ENCODE measurements at regions of chr7 and their contacts with region 1.

Region 1: DNA sequence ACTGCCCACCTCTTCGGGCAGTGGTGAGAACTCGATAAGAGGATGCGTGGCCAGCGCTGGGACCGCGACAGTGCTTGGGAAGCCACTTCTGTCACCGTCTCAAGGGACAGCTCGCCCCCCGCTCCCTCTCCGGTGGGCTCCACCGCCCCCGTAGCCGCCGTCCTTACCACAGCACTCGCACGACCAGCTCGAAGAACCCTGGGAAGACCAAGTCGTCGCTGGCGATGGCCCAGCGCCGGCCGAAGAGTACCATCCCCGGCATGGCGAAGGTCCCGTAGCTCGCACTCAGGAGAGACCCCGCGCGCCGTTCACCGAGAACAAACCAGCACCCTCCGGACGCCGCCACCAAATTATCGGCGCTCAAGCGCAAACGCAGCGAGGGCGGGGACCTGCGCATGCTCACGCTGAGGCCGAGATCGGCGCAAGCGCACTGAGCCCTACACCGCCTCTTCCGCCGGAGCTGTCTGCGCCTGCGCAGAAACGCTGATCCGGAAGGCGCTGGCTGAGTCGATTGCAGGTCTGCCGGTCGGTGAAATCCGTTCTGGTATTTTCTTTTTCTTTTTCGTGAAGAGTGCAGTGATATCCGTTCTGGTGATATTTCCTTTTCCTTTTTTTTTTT is at the start of gene DAGLB:
- DNase-seq: peak; percentile 82 to 87
- ATAC-seq: peak; percentile 82 to 84
- H3K4me3 ChIP-seq: peak within 1 kb of the TSS; percentile 91 to 97 (median 92)
- H3K27ac ChIP-seq: peak within 1 kb of the TSS; percentile 93 to 98 (median 97)
- H3K4me1 ChIP-seq: peaks cover 33 to 37% of the 10 kb centered on the region in 2 donors
- H3K27me3 ChIP-seq: no peaks in the 10 kb centered on the region
- CTCF ChIP-seq: no peak
- POLR2A ChIP-seq: peak; percentile 93 to 94
- total RNA-seq, gene DAGLB: 11.7 to 24.0 (median 16.1) TPM

Region 2: GRCh38 chr7:6008668-6009611 is 438.8 kb before region 1 on chr7 and contains the starts of genes AIMP2 and PMS2:
- in situ Hi-C with region 1: no loop called
- intact Hi-C with region 1: loop called (anchors 2 kb)
- DNase-seq: peak; percentile 99 to 100
- ATAC-seq: peak; percentile 88 to 90
- H3K4me3 ChIP-seq: peak within 1 kb of the TSS; percentile 66 to 95 (median 80)
- H3K27ac ChIP-seq: peak within 1 kb of the TSS; percentile 89 to 98 (median 92)
- H3K4me1 ChIP-seq: peaks cover 44 to 47% of the 10 kb centered on the region in 2 donors
- H3K27me3 ChIP-seq: no peaks in the 10 kb centered on the region
- CTCF ChIP-seq: peak in 3 of 5 experiments; percentile 7 to 30 (median 17)
- POLR2A ChIP-seq: peak; percentile 86 to 93
- total RNA-seq, gene AIMP2: 99.1 to 272 (median 194) TPM
- total RNA-seq, gene PMS2: 3.6 to 9.0 (median 7.2) TPM

Region 3: DNA sequence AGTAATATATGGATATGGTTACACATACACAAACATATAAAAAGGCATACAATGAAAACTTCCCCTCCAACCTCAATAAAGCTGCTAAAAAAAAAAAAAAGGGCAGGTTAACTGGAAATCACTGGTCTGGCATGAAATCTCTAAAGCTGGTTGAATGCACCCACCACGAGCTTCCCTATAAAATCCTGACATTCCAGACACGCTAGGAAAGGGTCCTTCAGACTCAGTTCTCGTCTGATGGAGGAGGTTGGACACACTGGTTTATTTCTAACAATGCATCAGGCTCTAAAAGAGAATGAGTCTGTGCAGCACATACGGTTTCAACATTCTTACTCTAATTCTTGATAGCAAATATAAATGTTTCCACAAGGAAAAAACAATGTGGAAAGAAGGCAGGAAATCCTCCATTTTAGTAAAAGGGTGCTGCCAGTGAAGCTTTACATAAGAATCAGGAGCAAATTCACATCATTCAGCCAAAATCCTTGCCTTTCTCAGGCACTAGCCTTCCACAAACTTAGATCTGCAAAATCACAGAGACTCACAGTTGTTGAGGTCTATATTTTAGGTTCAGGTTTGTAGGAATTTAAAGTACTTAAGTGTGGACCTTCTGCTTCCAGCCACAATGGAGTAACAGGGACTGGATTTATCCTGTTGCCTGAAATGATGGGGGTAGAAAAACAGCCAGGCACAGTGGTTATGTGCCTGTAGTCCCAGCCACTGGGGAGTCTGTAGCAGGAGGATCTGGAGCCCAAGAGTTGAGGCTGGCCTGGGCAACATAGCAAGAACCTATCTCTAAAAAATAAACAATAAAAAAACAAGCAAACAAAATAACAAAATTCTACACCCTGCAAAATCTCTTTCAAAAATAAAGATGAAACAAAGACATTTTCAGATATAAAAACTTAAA is 248.7 kb before region 1 on chr7:
- in situ Hi-C with region 1: no loop called
- intact Hi-C with region 1: no loop called
- DNase-seq: no peak
- ATAC-seq: no peak
- H3K4me3 ChIP-seq: no peak overlapping the region
- H3K27ac ChIP-seq: no peak overlapping the region
- H3K4me1 ChIP-seq: peaks cover 45 to 55% of the 10 kb centered on the region in 2 donors
- H3K27me3 ChIP-seq: no peaks in the 10 kb centered on the region
- CTCF ChIP-seq: no peak
- POLR2A ChIP-seq: no peak

Region 4: GRCh38 chr7:6338551-6339274 is 109.0 kb before region 1 on chr7:
- in situ Hi-C with region 1: no loop called
- intact Hi-C with region 1: no loop called
- DNase-seq: peak; percentile 91 to 96
- ATAC-seq: peak; percentile 95 to 96
- H3K4me3 ChIP-seq: peak overlapping the region in 3 of 4 donors; percentile 12 to 20 (median 18)
- H3K27ac ChIP-seq: peak overlapping the region; percentile 88 to 96 (median 94)
- H3K4me1 ChIP-seq: peaks cover 14 to 16% of the 10 kb centered on the region in 2 donors
- H3K27me3 ChIP-seq: no peaks in the 10 kb centered on the region
- CTCF ChIP-seq: no peak
- POLR2A ChIP-seq: peak; percentile 48 to 73

Region 5: DNA sequence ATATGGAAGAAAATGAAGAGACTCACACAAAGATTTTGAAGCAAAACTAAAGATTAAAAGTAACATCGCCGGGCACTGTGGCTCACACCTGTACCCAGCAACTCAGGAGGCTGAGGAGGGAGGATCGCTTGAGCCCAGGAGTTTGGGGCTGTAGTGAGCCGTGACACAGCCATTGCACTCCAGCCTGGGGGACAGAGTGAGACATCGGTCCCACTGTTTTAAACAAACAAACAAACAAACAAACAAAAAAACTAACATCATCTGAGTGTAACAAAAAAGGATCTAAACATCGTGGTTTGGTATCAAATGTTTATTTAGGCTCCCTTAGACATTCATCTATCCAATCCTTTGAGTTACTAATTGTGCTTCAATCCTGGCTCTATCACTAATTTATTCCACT is 33.8 kb after region 1 on chr7:
- in situ Hi-C with region 1: no loop called
- intact Hi-C with region 1: loop called (anchors 1 kb)
- DNase-seq: no peak
- ATAC-seq: no peak
- H3K4me3 ChIP-seq: no peak overlapping the region
- H3K27ac ChIP-seq: peak overlapping the region in 3 of 4 donors; percentile 30 to 60 (median 52)
- H3K4me1 ChIP-seq: peaks cover 53 to 57% of the 10 kb centered on the region in 2 donors
- H3K27me3 ChIP-seq: no peaks in the 10 kb centered on the region
- CTCF ChIP-seq: no peak
- POLR2A ChIP-seq: no peak

Region 6: GRCh38 chr7:7566651-7567611 is 1119.2 kb after region 1 on chr7 and contains the start of gene MIOS:
- in situ Hi-C with region 1: no loop called
- intact Hi-C with region 1: loop called (anchors 10 kb)
- DNase-seq: peak; percentile 89 to 90
- ATAC-seq: peak; percentile 66 to 67
- H3K4me3 ChIP-seq: peak within 1 kb of the TSS; percentile 67 to 85 (median 80)
- H3K27ac ChIP-seq: peak within 1 kb of the TSS; percentile 90 to 98 (median 96)
- H3K4me1 ChIP-seq: peaks cover 33 to 76% of the 10 kb centered on the region in 2 donors
- H3K27me3 ChIP-seq: no peaks in the 10 kb centered on the region
- CTCF ChIP-seq: peak in 1 of 5 experiments; percentile 18
- POLR2A ChIP-seq: peak; percentile 82 to 92
- total RNA-seq, gene MIOS: 68.4 to 336 (median 280) TPM